ENCODE measurements at regions of chr5 and their contacts with region 1.

Region 1: DNA sequence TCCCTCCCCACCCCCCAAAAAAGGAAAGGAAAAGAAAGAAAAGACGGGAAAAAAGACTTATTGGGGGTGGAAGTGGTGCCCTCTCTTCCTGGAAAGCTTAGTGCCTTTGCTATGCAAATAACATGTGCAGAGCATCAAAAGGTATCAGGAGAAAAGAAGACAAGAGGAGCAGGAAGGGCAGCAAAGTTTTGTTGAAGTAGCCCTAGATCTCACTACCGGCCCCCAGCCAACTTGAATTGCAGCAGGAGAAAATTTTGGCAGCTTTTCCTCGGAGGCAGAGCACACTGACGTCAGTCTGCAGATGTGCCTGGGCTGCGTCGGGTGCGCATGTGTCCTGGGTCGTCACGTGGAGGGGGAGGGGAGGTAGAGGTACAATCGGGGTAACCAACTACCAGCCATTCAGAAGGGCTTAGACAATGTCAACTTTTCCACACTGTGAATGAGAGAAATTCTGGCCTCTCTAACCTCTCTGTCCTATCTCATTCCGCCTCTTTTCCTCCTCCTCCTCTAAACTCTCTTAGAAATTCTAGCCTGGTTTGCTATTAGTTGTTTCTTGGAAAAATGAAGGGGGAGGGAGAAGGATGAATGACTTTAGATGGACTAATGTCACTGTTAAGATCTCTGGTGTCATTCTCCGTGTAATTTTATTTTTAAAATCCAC is at the start of gene ADAMTS6:
- DNase-seq: peak; percentile 91
- H3K4me3 ChIP-seq: peak within 1 kb of the TSS; percentile 76
- H3K27ac ChIP-seq: peak within 1 kb of the TSS; percentile 96
- H3K4me1 ChIP-seq: peaks cover 30% of the 10 kb centered on the region
- H3K27me3 ChIP-seq: no peaks in the 10 kb centered on the region
- CTCF ChIP-seq: no peak
- total RNA-seq, gene ADAMTS6: 1.5 TPM

Region 2: DNA sequence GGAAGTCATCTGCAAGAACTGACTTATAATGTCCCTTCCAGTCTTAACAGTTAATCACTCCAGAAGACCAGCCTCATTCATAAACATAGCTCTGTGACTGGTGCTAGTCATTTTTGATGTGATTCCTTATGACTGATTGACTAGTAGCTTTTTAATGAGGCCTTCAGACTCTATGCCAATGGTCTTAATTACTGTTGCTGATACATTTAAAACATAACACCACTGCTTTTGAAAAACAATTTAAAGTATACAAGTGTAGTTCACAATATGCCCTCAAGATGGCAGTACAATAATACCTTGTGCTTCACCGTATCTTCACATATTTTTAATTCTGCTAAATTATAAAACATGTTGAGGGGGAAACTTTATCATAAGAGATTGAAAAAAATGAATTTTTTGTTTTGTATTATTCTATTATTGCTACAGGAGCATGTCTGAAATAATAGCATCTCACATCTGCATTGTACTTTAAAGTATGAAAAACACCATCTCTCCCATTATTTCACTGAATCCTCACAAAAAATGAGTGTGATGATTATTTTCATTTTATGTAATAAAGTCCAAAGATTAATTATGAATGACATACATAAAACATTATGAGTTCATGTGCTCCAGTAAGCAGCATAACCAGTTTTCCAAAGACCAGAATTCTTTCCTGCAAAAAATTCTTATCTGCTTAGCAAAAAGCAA is 846.6 kb before region 1 on chr5:
- intact Hi-C with region 1: loop called (anchors 10 kb)
- DNase-seq: no peak
- H3K4me3 ChIP-seq: no peak overlapping the region
- H3K27ac ChIP-seq: no peak overlapping the region
- H3K4me1 ChIP-seq: no peaks in the 10 kb centered on the region
- H3K27me3 ChIP-seq: peaks cover 24% of the 10 kb centered on the region
- CTCF ChIP-seq: peak; percentile 83

Region 3: GRCh38 chr5:64811050-64811640 is 670.6 kb before region 1 on chr5:
- intact Hi-C with region 1: loop called (anchors 5 kb)
- DNase-seq: no peak
- H3K4me3 ChIP-seq: no peak overlapping the region
- H3K27ac ChIP-seq: no peak overlapping the region
- H3K4me1 ChIP-seq: peaks cover 28% of the 10 kb centered on the region
- H3K27me3 ChIP-seq: no peaks in the 10 kb centered on the region
- CTCF ChIP-seq: peak; percentile 81

Region 4: DNA sequence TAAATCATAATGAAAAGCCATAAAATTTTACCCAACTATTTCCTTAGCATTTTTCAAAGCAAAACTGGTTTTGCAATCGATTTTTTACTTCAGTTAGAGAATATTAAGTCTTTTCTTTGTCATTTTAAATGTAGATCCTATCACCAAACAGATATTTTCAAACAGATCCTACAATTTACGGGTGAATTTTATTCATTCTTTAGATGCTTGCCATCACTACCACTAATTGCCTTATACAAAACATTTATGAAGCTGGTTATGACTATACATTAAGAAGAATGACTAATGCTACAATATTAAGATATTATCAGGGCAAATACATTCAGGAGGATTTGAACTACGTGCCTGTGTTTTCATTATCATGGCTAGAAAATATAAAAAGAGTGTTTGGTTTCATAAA is 516.2 kb before region 1 on chr5:
- intact Hi-C with region 1: loop called (anchors 5 kb)
- DNase-seq: no peak
- H3K4me3 ChIP-seq: no peak overlapping the region
- H3K27ac ChIP-seq: no peak overlapping the region
- H3K4me1 ChIP-seq: no peaks in the 10 kb centered on the region
- H3K27me3 ChIP-seq: no peaks in the 10 kb centered on the region
- CTCF ChIP-seq: no peak

Region 5: GRCh38 chr5:65035211-65036206 is 446.3 kb before region 1 on chr5:
- intact Hi-C with region 1: no loop called
- DNase-seq: peak; percentile 90
- H3K4me3 ChIP-seq: peak overlapping the region; percentile 86
- H3K27ac ChIP-seq: peak overlapping the region; percentile 98
- H3K4me1 ChIP-seq: peaks cover 52% of the 10 kb centered on the region
- H3K27me3 ChIP-seq: no peaks in the 10 kb centered on the region
- CTCF ChIP-seq: peak; percentile 40

Region 6: GRCh38 chr5:65102828-65103711 is 378.7 kb before region 1 on chr5:
- intact Hi-C with region 1: loop called (anchors 10 kb)
- DNase-seq: peak; percentile 74
- H3K4me3 ChIP-seq: peak overlapping the region; percentile 71
- H3K27ac ChIP-seq: peak overlapping the region; percentile 89
- H3K4me1 ChIP-seq: peaks cover 17% of the 10 kb centered on the region
- H3K27me3 ChIP-seq: no peaks in the 10 kb centered on the region
- CTCF ChIP-seq: peak; percentile 62